Spleen (tissue), 13 donors: ENCODE measurements at regions of chr17 and their contacts with region 1.

Region 1: DNA sequence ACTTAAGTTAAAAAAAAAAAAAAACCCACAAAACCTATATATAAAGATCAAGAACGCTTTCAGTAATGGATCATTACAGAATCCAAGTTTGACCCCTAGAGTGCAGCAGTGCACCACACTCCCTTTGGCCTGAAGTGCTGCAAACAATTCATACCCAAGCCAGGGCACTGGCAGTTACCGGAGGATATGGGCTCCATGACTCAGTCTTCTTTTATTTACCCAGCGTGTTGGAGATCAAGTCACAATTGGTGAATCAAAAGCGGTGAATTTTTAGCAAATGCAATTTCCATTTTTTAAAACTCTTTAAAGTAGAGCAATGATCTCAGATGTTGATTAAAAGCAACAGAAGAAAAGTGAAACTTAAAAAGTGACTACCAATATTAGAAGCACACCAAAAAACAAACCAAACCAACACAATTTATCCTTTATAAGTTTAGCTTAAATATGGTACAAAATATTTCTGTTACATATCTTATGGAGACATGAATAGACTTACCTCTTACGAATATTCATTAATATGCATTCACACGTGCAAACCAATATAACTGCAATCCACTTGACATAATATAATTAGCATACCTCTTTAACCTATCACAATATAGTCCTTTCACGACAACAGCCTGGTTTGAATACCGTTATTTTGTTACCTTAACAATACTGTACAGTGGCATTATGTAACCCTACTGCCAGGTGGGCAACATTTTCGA is 46.3 kb downstream of the ZNF652 start:
- DNase-seq: peak; percentile 86
- H3K4me3 ChIP-seq: peak overlapping the region in 2 of 8 donors; percentile 8 to 35
- H3K27ac ChIP-seq: peak overlapping the region in 5 of 8 donors; percentile 3 to 75 (median 50)
- H3K4me1 ChIP-seq: peaks cover 22 to 43% (median 28%) of the 10 kb centered on the region in 6 donors
- H3K27me3 ChIP-seq: no peaks in the 10 kb centered on the region
- CTCF ChIP-seq: peak; percentile 50 to 92 (median 79)
- POLR2A ChIP-seq: no peak

Region 2: DNA sequence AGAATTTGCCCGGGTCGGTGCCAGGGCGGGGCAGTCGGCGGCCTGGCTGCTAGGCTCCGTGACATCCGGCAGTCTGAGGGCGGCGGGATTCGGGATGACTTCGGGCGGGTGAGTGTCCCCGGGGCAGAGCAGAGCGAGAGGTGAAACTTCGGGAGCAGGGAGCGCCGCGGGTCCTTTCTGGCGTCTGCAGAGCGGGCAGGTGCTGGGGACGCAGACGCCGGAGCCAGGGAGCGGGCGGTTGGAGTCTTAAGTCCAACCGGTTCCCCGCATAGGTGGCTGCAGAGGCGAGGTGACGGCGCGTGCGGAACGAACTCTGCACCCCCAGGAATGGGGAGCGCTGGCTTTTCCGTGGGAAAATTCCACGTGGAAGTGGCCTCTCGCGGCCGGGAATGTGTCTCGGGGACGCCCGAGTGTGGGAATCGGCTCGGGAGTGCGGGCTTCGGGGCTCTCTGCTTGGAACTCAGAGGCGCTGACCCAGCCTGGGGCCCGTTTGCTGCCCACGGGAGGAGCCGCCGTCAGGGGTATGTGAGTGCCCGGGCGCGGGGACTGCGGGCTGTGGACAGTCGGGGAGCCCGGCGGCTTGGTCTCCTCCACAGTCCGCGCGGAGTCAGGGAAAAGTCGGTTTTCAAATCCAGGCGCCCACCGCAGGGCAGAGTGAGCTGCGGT is 182.9 kb before region 1 on chr17 and contains the start of gene B4GALNT2:
- intact Hi-C with region 1: no loop called
- DNase-seq: no peak
- H3K4me3 ChIP-seq: peak within 1 kb of the TSS in 4 of 8 donors; percentile 19 to 60 (median 28)
- H3K27ac ChIP-seq: no peak within 1 kb of the TSS
- H3K4me1 ChIP-seq: peaks cover 0 to 12% (median 11%) of the 10 kb centered on the region in 6 donors
- H3K27me3 ChIP-seq: peaks cover 0 to 68% (median 47%) of the 10 kb centered on the region in 7 donors
- CTCF ChIP-seq: no peak
- POLR2A ChIP-seq: no peak
- total RNA-seq, gene B4GALNT2: 0.10 to 0.21 (median 0.18) TPM in 4 of 7 donors, not detected in the others

Region 3: GRCh38 chr17:49191917-49192741 is 123.6 kb before region 1 on chr17:
- intact Hi-C with region 1: no loop called
- DNase-seq: peak; percentile 97
- H3K4me3 ChIP-seq: peak overlapping the region; percentile 60 to 78 (median 68)
- H3K27ac ChIP-seq: peak overlapping the region; percentile 93 to 99 (median 97)
- H3K4me1 ChIP-seq: peaks cover 5 to 48% (median 22%) of the 10 kb centered on the region in 6 donors
- H3K27me3 ChIP-seq: no peaks in the 10 kb centered on the region
- CTCF ChIP-seq: peak in 10 of 11 experiments; percentile 8 to 60 (median 41)
- POLR2A ChIP-seq: no peak

Region 4: DNA sequence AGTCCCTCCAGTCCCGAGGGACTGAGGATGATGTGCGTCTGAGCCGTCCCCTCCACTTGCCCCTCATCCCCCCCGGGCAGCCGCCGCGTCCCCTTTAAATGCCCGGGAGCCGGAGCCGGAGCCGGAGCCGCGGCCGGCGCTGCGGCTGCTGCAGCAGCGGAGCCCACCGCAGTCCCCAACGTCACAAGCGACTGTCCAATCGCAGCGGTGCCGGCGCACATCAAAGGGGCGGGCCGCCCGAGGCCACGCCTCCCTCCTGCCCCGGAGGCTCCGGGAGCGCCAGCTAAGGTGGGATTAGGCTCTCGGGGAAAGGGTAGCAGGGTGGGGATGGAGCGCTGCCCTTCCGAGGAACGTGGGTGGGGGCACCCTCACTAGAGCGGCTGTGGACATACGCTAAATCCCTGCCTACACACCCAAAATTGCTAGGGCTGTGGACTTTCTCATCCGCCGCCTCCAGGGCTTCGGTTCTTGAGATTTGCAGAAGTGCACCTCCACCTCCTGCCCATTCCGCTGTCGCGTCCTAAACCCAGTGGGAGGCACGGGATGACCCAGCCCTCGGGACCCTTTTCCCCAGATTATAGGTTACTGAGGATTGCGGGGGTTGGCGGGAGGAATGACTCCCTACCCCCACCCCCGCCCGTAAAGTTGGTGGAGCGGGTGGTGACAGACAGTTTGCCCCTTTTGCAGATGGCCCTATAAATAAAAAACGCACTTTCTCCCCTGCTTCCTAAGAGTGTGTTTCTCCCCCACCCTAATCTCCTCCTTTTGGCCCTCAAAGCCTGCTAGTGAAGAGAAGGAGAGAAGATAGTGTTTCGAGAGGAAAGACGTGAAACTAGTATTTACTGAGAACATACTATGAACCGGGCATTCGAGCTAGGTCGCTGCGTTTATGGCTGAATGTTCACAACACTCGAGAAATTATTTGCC is 84.8 kb before region 1 on chr17 and contains the start of gene PHOSPHO1:
- intact Hi-C with region 1: no loop called
- DNase-seq: peak; percentile 98
- H3K4me3 ChIP-seq: peak within 1 kb of the TSS; percentile 52 to 78 (median 62)
- H3K27ac ChIP-seq: peak within 1 kb of the TSS in 7 of 8 donors; percentile 55 to 92 (median 74)
- H3K4me1 ChIP-seq: peaks cover 14 to 79% (median 34%) of the 10 kb centered on the region in 6 donors
- H3K27me3 ChIP-seq: peaks cover 0 to 19% (median 0%) of the 10 kb centered on the region in 7 donors
- CTCF ChIP-seq: peak in 3 of 11 experiments; percentile 15 to 45 (median 25)
- POLR2A ChIP-seq: no peak
- total RNA-seq, gene PHOSPHO1: 1.5 to 12.2 (median 6.9) TPM

Region 5: GRCh38 chr17:49361902-49362722 is 46.4 kb after region 1 on chr17 and contains the start of gene ZNF652:
- intact Hi-C with region 1: loop called (anchors 10 kb)
- DNase-seq: peak; percentile 99
- H3K4me3 ChIP-seq: peak within 1 kb of the TSS; percentile 69 to 97 (median 86)
- H3K27ac ChIP-seq: peak within 1 kb of the TSS; percentile 87 to 99 (median 96)
- H3K4me1 ChIP-seq: peaks cover 24 to 66% (median 50%) of the 10 kb centered on the region in 6 donors
- H3K27me3 ChIP-seq: no peaks in the 10 kb centered on the region
- CTCF ChIP-seq: no peak
- POLR2A ChIP-seq: no peak
- total RNA-seq, gene ZNF652: 51.4 to 73.9 (median 57.5) TPM

Region 6: GRCh38 chr17:49397586-49397985 is 81.9 kb after region 1 on chr17:
- intact Hi-C with region 1: loop called (anchors 2 kb)
- DNase-seq: no peak
- H3K4me3 ChIP-seq: no peak overlapping the region
- H3K27ac ChIP-seq: no peak overlapping the region
- H3K4me1 ChIP-seq: peaks cover 0 to 36% (median 22%) of the 10 kb centered on the region in 6 donors
- H3K27me3 ChIP-seq: no peaks in the 10 kb centered on the region
- CTCF ChIP-seq: no peak
- POLR2A ChIP-seq: no peak